ENCODE measurements at regions of chr1 and their contacts with region 1.

Region 1: DNA sequence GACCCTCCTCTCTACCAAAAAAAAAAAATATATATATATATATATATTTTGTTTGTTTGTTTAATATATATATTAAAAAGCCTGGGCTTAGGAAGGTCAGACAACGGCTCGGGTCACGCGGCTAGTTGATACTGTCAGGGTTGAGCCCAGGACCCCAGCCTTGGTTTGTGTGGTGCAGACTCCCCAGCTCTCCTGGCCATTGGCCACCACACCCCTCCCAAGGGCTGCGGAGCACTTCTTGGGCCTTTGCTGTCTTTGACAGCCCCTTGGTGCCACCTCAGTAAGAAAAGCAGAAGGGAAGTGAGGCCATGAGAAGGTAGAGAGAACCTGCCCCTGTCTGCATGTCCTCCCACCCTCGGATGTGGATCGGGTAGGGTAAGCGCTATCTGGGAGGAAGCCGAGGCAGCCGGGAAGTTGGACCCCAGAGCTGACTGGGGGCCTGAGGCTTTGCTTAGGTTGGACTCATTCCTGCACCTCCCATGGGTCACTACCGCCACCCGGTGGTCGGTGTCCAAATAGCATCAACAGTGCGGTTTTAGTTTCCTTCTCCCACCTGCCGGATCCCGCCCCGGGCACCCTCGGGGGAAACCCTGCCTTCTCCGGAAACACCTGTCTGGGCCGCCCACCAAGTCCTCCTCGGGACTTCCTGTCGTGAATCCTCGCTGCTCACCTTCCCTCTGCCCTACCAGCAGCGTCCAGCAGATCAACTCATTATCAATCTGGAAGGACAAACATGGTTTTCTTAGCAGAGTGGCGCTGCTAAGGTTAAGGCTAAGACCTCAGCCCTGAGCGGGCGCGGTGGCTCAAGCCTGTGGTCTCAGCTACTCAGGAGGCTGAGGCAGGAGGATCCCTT is 29.8 kb upstream of the GNPAT start:
- DNase-seq: peak; percentile 77 to 88
- ATAC-seq: peak; percentile 89 to 96 (median 92)
- H3K4me3 ChIP-seq: peak overlapping the region; percentile 63
- H3K27ac ChIP-seq: no peak overlapping the region
- H3K4me1 ChIP-seq: no peaks in the 10 kb centered on the region
- H3K27me3 ChIP-seq: peaks cover 0 to 16% (median 0%) of the 10 kb centered on the region in 3 donors
- CTCF ChIP-seq: peak; percentile 91

Region 2: GRCh38 chr1:230797942-230798418 is 413.3 kb before region 1 on chr1:
- intact Hi-C with region 1: loop called (anchors 1 to 5 kb)
- DNase-seq: peak; percentile 42 to 70
- ATAC-seq: peak; percentile 77 to 94 (median 89)
- H3K4me3 ChIP-seq: no peak overlapping the region
- H3K27ac ChIP-seq: no peak overlapping the region
- H3K4me1 ChIP-seq: no peaks in the 10 kb centered on the region
- H3K27me3 ChIP-seq: no peaks in the 10 kb centered on the region
- CTCF ChIP-seq: peak; percentile 75

Region 3: DNA sequence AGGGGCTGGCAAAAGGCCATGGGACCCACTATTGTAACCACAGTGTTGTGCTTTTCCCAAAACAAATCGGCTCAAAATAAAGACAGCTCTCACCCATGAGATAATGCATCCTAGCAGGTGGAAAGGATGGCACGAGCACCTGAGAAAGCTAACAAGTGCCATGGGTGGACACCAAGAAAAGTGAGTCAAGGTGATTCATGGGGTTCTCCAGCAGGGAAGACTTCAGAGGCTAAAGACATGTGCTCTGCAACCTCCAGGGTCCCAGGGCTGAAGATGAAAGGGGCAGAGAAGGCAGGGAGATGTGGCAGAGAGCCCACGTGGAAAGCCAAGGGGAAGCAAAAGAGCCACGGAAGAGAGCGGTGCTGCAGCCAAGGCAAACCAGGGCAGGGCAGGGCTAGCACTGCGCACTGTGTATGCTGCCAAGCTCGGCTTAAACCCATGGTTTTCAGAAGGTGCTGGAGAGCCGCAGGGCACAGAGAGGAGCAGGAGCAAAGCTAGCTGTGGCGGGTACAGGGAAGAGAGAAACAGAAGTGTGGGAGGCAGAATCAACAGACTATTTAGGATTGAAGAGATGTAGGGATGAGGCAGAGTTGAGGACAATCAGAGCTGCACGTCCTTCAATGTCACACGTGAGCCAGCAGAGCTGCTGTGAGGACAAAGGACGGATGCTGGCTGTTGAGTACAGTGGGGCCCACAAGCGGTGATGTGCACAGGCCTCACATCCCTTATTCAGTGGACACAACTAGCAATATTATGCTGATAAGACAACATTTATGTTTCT is 301.1 kb before region 1 on chr1:
- intact Hi-C with region 1: loop called in 1 of 2 experiments (anchors 5 kb)
- DNase-seq: peak; percentile 21 to 59
- ATAC-seq: peak; percentile 82 to 93 (median 86)
- H3K4me3 ChIP-seq: no peak overlapping the region
- H3K27ac ChIP-seq: no peak overlapping the region
- H3K4me1 ChIP-seq: peaks cover 18% of the 10 kb centered on the region
- H3K27me3 ChIP-seq: no peaks in the 10 kb centered on the region
- CTCF ChIP-seq: no peak

Region 4: GRCh38 chr1:230917284-230918135 is 293.7 kb before region 1 on chr1:
- intact Hi-C with region 1: loop called (anchors 2 to 5 kb)
- DNase-seq: peak; percentile 59 to 67
- ATAC-seq: peak; percentile 57 to 88 (median 80)
- H3K4me3 ChIP-seq: no peak overlapping the region
- H3K27ac ChIP-seq: no peak overlapping the region
- H3K4me1 ChIP-seq: no peaks in the 10 kb centered on the region
- H3K27me3 ChIP-seq: no peaks in the 10 kb centered on the region
- CTCF ChIP-seq: peak; percentile 56

Region 5: GRCh38 chr1:230978491-230979388 is 232.5 kb before region 1 on chr1 and contains the starts of genes ARV1 and TTC13:
- intact Hi-C with region 1: loop called in 1 of 2 experiments (anchors 5 kb)
- DNase-seq: peak; percentile 99
- ATAC-seq: peak; percentile 99 to 100 (median 100)
- H3K4me3 ChIP-seq: peak within 1 kb of the TSS; percentile 81
- H3K27ac ChIP-seq: peak within 1 kb of the TSS; percentile 65
- H3K4me1 ChIP-seq: peaks cover 16% of the 10 kb centered on the region
- H3K27me3 ChIP-seq: no peaks in the 10 kb centered on the region
- CTCF ChIP-seq: peak; percentile 15
- total RNA-seq, gene ARV1: 7.9 to 18.7 (median 12.2) TPM
- total RNA-seq, gene TTC13: 7.6 to 14.3 (median 9.5) TPM

Region 6: GRCh38 chr1:231091831-231092301 is 119.4 kb before region 1 on chr1:
- intact Hi-C with region 1: loop called in 1 of 2 experiments (anchors 5 kb)
- DNase-seq: no peak
- ATAC-seq: no peak
- H3K4me3 ChIP-seq: no peak overlapping the region
- H3K27ac ChIP-seq: no peak overlapping the region
- H3K4me1 ChIP-seq: no peaks in the 10 kb centered on the region
- H3K27me3 ChIP-seq: peaks cover 0 to 5% (median 4%) of the 10 kb centered on the region in 3 donors
- CTCF ChIP-seq: peak; percentile 26

Region 7: GRCh38 chr1:231170875-231171274 is 40.4 kb before region 1 on chr1:
- intact Hi-C with region 1: loop called in 1 of 2 experiments (anchors 1 kb)
- DNase-seq: no peak
- ATAC-seq: no peak
- H3K4me3 ChIP-seq: no peak overlapping the region
- H3K27ac ChIP-seq: no peak overlapping the region
- H3K4me1 ChIP-seq: no peaks in the 10 kb centered on the region
- H3K27me3 ChIP-seq: peaks cover 0 to 4% (median 3%) of the 10 kb centered on the region in 3 donors
- CTCF ChIP-seq: no peak